CD4-positive, alpha-beta memory T cell (primary cell): ENCODE measurements at regions of chr22 and their contacts with region 1.

Region 1: GRCh38 chr22:37862570-37863325 is 13.5 kb downstream of the EIF3L start:
- DNase-seq: no peak
- H3K4me3 ChIP-seq: no peak overlapping the region
- H3K4me3 Mint-ChIP-seq: no peak overlapping the region
- H3K27ac ChIP-seq: no peak overlapping the region
- H3K27ac Mint-ChIP-seq: peak overlapping the region in 3 of 7 donors; percentile 38 to 74 (median 53)
- H3K4me1 ChIP-seq: peaks cover 5% of the 10 kb centered on the region
- H3K4me1 Mint-ChIP-seq: peaks cover 2 to 5% (median 4%) of the 10 kb centered on the region in 4 donors
- H3K27me3 ChIP-seq: no peaks in the 10 kb centered on the region
- H3K27me3 Mint-ChIP-seq: no peaks in the 10 kb centered on the region

Region 2: GRCh38 chr22:37621352-37621860 is 241.3 kb before region 1 on chr22:
- CTCF ChIA-PET with region 1: no interaction called
- POLR2A ChIA-PET with region 1: no interaction called
- intact Hi-C with region 1: no loop called
- DNase-seq: peak in 1 of 5 donors; percentile 16
- H3K4me3 ChIP-seq: no peak overlapping the region
- H3K4me3 Mint-ChIP-seq: no peak overlapping the region
- H3K27ac ChIP-seq: no peak overlapping the region
- H3K27ac Mint-ChIP-seq: peak overlapping the region in 2 of 7 donors; percentile 18 to 36
- H3K4me1 ChIP-seq: peaks cover 33% of the 10 kb centered on the region
- H3K4me1 Mint-ChIP-seq: peaks cover 8 to 34% (median 23%) of the 10 kb centered on the region in 4 donors
- H3K27me3 ChIP-seq: no peaks in the 10 kb centered on the region
- H3K27me3 Mint-ChIP-seq: no peaks in the 10 kb centered on the region

Region 3: DNA sequence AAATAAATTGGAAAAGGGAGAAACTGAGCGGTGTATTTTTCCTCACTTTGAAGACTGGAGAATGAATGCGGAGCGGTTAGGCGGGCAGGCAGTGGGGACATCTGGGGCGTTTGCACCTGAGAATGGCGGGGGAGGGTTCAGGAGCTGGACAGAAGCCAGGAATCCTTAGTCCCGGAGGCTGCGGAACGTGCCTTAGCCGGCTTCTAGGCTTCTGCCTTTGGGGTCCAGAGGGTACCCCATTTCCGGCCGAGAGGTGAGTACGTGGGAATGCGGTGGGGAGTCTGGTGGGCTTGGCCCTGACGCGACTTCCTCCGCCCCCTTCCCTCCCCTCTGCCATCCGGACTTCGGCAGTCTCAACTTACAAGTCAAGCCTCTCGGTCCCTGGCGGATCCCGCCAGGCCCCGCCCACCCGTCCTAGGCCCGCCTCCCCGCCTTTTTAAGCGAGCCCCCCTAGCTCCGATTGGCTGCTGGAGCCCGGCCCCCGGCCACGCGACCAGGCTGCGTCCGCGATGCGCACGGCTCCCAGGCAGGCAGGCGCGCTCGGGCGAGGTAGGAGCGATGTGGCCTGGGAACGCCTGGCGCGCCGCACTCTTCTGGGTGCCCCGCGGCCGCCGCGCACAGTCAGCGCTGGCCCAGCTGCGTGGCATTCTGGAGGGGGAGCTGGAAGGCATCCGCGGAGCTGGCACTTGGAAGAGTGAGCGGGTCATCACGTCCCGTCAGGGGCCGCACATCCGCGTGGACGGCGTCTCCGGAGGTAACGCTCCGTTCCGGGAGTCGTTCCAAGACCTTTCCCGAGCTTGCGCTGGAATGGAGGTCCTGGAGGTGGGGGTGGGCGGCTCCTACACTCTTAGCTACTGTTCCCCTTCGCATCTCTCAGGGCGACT is 55.1 kb before region 1 on chr22 and contains the start of gene GCAT:
- CTCF ChIA-PET with region 1: interaction called, 21 read pairs
- POLR2A ChIA-PET with region 1: interaction called, 3 read pairs
- intact Hi-C with region 1: no loop called
- DNase-seq: peak; percentile 70 to 82 (median 75)
- H3K4me3 ChIP-seq: peak within 1 kb of the TSS; percentile 36 to 45
- H3K4me3 Mint-ChIP-seq: peak within 1 kb of the TSS; percentile 69 to 87 (median 78)
- H3K27ac ChIP-seq: no peak within 1 kb of the TSS
- H3K27ac Mint-ChIP-seq: peak within 1 kb of the TSS in 4 of 7 donors; percentile 32 to 47 (median 45)
- H3K4me1 ChIP-seq: peaks cover 50% of the 10 kb centered on the region
- H3K4me1 Mint-ChIP-seq: peaks cover 17 to 50% (median 37%) of the 10 kb centered on the region in 4 donors
- H3K27me3 ChIP-seq: peaks cover 20% of the 10 kb centered on the region
- H3K27me3 Mint-ChIP-seq: peaks cover 30% of the 10 kb centered on the region in 2 donors
- total RNA-seq, gene GCAT: 3.4 to 4.4 TPM

Region 4: GRCh38 chr22:37832022-37832857 is 30.5 kb before region 1 on chr22:
- CTCF ChIA-PET with region 1: interaction called, 15 read pairs
- POLR2A ChIA-PET with region 1: no interaction called
- intact Hi-C with region 1: no loop called
- DNase-seq: no peak
- H3K4me3 ChIP-seq: no peak overlapping the region
- H3K4me3 Mint-ChIP-seq: no peak overlapping the region
- H3K27ac ChIP-seq: no peak overlapping the region
- H3K27ac Mint-ChIP-seq: peak overlapping the region in 1 of 7 donors; percentile 42
- H3K4me1 ChIP-seq: no peaks in the 10 kb centered on the region
- H3K4me1 Mint-ChIP-seq: peaks cover 0 to 3% (median 0%) of the 10 kb centered on the region in 4 donors
- H3K27me3 ChIP-seq: no peaks in the 10 kb centered on the region
- H3K27me3 Mint-ChIP-seq: no peaks in the 10 kb centered on the region

Region 5: GRCh38 chr22:37849089-37849751 is 13.5 kb before region 1 on chr22 and contains the start of gene EIF3L:
- CTCF ChIA-PET with region 1: interaction called, 35 read pairs
- POLR2A ChIA-PET with region 1: interaction called, 7 read pairs
- intact Hi-C with region 1: loop called (anchors 1 kb)
- DNase-seq: peak; percentile 81 to 88 (median 85)
- H3K4me3 ChIP-seq: peak within 1 kb of the TSS; percentile 61 to 94
- H3K4me3 Mint-ChIP-seq: peak within 1 kb of the TSS; percentile 83 to 98 (median 93)
- H3K27ac ChIP-seq: peak within 1 kb of the TSS; percentile 87
- H3K27ac Mint-ChIP-seq: peak within 1 kb of the TSS; percentile 91 to 99 (median 97)
- H3K4me1 ChIP-seq: peaks cover 29% of the 10 kb centered on the region
- H3K4me1 Mint-ChIP-seq: peaks cover 28 to 58% (median 43%) of the 10 kb centered on the region in 4 donors
- H3K27me3 ChIP-seq: no peaks in the 10 kb centered on the region
- H3K27me3 Mint-ChIP-seq: no peaks in the 10 kb centered on the region
- total RNA-seq, gene EIF3L: 550 to 571 TPM

Region 6: GRCh38 chr22:37880668-37881440 is 18.1 kb after region 1 on chr22:
- CTCF ChIA-PET with region 1: interaction called, 17 read pairs
- POLR2A ChIA-PET with region 1: no interaction called
- intact Hi-C with region 1: no loop called
- DNase-seq: no peak
- H3K4me3 ChIP-seq: no peak overlapping the region
- H3K4me3 Mint-ChIP-seq: no peak overlapping the region
- H3K27ac ChIP-seq: no peak overlapping the region
- H3K27ac Mint-ChIP-seq: peak overlapping the region in 2 of 7 donors; percentile 9 to 29
- H3K4me1 ChIP-seq: no peaks in the 10 kb centered on the region
- H3K4me1 Mint-ChIP-seq: peaks cover 7 to 16% (median 8%) of the 10 kb centered on the region in 4 donors
- H3K27me3 ChIP-seq: no peaks in the 10 kb centered on the region
- H3K27me3 Mint-ChIP-seq: no peaks in the 10 kb centered on the region

Region 7: DNA sequence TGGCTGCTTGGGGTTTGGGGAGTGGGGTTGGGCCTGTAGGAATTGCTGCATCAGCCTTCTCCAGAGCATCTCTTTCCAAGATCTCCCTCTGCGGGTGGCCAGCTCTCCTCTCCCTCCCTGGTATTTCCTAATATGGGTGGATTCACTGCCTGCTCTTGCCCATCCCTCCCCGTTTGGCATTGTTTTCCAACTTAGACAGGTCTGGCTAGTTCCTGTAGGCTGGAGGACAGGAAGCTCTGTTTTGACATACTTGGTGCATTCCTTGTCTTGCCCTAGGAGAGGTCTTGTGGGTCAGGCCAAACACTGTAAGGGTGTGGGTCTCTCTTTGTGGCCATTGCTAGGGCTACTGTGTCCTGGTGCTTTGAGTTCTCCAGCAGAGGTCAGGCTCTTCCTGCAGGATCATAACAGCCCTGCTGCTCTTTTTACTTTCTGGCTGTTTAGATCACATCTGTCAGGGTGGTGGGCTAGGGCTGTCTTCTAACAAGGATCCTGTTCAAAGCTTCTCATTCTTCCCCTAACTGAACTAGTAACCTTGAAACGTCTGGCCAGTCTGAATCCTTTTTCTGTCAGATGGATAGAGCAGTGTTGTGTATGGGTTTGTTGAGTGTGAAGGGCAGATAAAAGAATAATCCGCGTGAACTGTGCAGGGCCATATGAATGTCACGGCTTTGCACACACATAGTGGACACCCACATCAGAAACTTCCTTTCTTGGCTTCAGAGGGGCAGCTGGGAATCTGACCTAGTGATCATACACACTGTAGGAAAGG is 25.0 kb after region 1 on chr22:
- CTCF ChIA-PET with region 1: interaction called, 12 read pairs
- POLR2A ChIA-PET with region 1: no interaction called
- intact Hi-C with region 1: no loop called
- DNase-seq: no peak
- H3K4me3 ChIP-seq: no peak overlapping the region
- H3K4me3 Mint-ChIP-seq: no peak overlapping the region
- H3K27ac ChIP-seq: no peak overlapping the region
- H3K27ac Mint-ChIP-seq: peak overlapping the region in 3 of 7 donors; percentile 2 to 36 (median 27)
- H3K4me1 ChIP-seq: no peaks in the 10 kb centered on the region
- H3K4me1 Mint-ChIP-seq: peaks cover 4 to 10% (median 9%) of the 10 kb centered on the region in 4 donors
- H3K27me3 ChIP-seq: no peaks in the 10 kb centered on the region
- H3K27me3 Mint-ChIP-seq: no peaks in the 10 kb centered on the region

Region 8: DNA sequence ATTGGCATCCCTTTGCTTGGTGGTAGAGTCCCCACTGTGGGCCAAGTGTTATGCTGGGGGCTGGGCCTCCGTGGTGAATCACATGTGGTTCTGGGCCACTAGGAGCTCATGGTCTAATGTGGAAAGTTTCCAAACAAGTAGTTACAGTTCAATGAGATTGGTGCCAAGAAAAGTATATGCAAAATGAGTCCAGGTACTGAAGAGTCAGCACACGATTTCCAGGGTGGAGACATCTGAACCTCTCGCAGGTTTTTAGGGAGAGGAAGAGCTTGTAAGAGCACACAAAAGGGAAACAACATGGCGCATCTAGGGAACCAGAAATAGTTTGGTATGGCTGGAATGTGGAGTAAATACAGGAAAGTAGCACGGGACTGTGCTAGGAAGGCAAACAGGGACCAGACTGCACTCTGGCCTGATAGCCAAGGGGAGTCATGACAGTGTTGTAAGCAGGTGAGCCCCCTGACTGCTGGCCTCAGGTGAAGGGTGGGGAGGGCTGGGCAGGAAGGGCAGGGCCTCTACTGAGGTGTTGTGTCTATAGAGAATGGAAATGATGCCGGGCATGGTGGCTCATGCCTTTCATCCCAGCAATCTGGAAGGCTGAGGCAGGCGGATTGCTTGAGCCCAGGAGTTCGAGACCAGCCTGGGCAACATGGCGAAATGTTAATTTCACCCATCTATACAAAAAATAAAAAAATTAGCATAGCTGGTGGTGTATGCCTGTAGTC is 103.4 kb after region 1 on chr22:
- CTCF ChIA-PET with region 1: interaction called, 11 read pairs
- POLR2A ChIA-PET with region 1: no interaction called
- intact Hi-C with region 1: loop called (anchors 1 kb)
- DNase-seq: no peak
- H3K4me3 ChIP-seq: no peak overlapping the region
- H3K4me3 Mint-ChIP-seq: no peak overlapping the region
- H3K27ac ChIP-seq: no peak overlapping the region
- H3K27ac Mint-ChIP-seq: no peak overlapping the region
- H3K4me1 ChIP-seq: no peaks in the 10 kb centered on the region
- H3K4me1 Mint-ChIP-seq: peaks cover 5 to 10% (median 6%) of the 10 kb centered on the region in 4 donors
- H3K27me3 ChIP-seq: no peaks in the 10 kb centered on the region
- H3K27me3 Mint-ChIP-seq: no peaks in the 10 kb centered on the region